ENCODE measurements at regions of chr22 and their contacts with region 1.

Region 1: GRCh38 chr22:39532215-39533071 is at the start of gene RPS19BP1:
- DNase-seq: peak; percentile 100
- ATAC-seq: peak; percentile 88
- H3K4me3 Mint-ChIP-seq: peak within 1 kb of the TSS; percentile 98
- H3K27ac Mint-ChIP-seq: peak within 1 kb of the TSS; percentile 94
- H3K4me1 Mint-ChIP-seq: peaks cover 60% of the 10 kb centered on the region
- H3K27me3 Mint-ChIP-seq: no peaks in the 10 kb centered on the region
- total RNA-seq, gene RPS19BP1: 80.1 to 80.2 TPM

Region 2: GRCh38 chr22:39343259-39344048 is 189.0 kb before region 1 on chr22:
- CTCF ChIA-PET with region 1: interaction called, 14 read pairs
- POLR2A ChIA-PET with region 1: no interaction called
- DNase-seq: peak; percentile 73
- ATAC-seq: peak; percentile 89
- H3K4me3 Mint-ChIP-seq: no peak overlapping the region
- H3K27ac Mint-ChIP-seq: no peak overlapping the region
- H3K4me1 Mint-ChIP-seq: peaks cover 4% of the 10 kb centered on the region
- H3K27me3 Mint-ChIP-seq: peaks cover 30% of the 10 kb centered on the region

Region 3: GRCh38 chr22:39502109-39502788 is 30.2 kb before region 1 on chr22 and contains the start of gene MIEF1:
- CTCF ChIA-PET with region 1: interaction called, 264 read pairs
- POLR2A ChIA-PET with region 1: interaction called, 4 read pairs
- DNase-seq: peak; percentile 95
- ATAC-seq: peak; percentile 98
- H3K4me3 Mint-ChIP-seq: peak within 1 kb of the TSS; percentile 98
- H3K27ac Mint-ChIP-seq: peak within 1 kb of the TSS; percentile 97
- H3K4me1 Mint-ChIP-seq: peaks cover 41% of the 10 kb centered on the region
- H3K27me3 Mint-ChIP-seq: peaks cover 6% of the 10 kb centered on the region
- total RNA-seq, gene MIEF1: 37.9 to 38.2 TPM

Region 4: DNA sequence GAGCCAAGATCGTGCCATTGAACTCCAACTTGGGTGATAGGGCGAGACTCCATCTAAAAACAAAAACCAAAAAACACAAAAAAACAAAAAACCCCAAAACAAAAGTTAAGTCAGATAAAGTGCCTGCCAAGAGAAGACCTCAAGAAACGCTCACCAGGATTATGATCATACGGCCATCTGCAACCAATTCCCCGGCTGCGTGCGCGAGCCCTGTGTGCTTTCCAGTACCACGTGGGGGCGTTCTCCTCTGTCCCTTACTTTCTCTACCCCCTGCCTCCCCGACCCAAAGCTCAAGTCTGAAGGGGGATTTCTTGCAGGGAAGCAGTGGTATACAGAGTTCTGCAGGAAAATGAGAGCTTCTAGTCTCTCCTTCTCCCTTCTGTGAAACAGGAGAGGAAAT is 10.7 kb after region 1 on chr22:
- CTCF ChIA-PET with region 1: interaction called, 11 read pairs
- POLR2A ChIA-PET with region 1: interaction called, 3 read pairs
- DNase-seq: no peak
- ATAC-seq: peak; percentile 49
- H3K4me3 Mint-ChIP-seq: no peak overlapping the region
- H3K27ac Mint-ChIP-seq: no peak overlapping the region
- H3K4me1 Mint-ChIP-seq: peaks cover 20% of the 10 kb centered on the region
- H3K27me3 Mint-ChIP-seq: peaks cover 23% of the 10 kb centered on the region

Region 5: GRCh38 chr22:40024201-40025061 is 492.0 kb after region 1 on chr22:
- CTCF ChIA-PET with region 1: interaction called, 113 read pairs
- POLR2A ChIA-PET with region 1: no interaction called
- DNase-seq: peak; percentile 74
- ATAC-seq: peak; percentile 84
- H3K4me3 Mint-ChIP-seq: no peak overlapping the region
- H3K27ac Mint-ChIP-seq: no peak overlapping the region
- H3K4me1 Mint-ChIP-seq: peaks cover 6% of the 10 kb centered on the region
- H3K27me3 Mint-ChIP-seq: no peaks in the 10 kb centered on the region